Heart left ventricle (tissue), 16 donors: ENCODE measurements at regions of chr1 and their contacts with region 1.

Region 1: GRCh38 chr1:20753589-20753988 is 21.1 kb upstream of the SH2D5 start:
- DNase-seq: no peak
- ATAC-seq: no peak
- H3K4me3 ChIP-seq: no peak overlapping the region
- H3K27ac ChIP-seq: no peak overlapping the region
- H3K4me1 ChIP-seq: peaks cover 0 to 5% (median 0%) of the 10 kb centered on the region in 12 donors
- H3K27me3 ChIP-seq: no peaks in the 10 kb centered on the region
- CTCF ChIP-seq: no peak
- POLR2A ChIP-seq: no peak

Region 2: DNA sequence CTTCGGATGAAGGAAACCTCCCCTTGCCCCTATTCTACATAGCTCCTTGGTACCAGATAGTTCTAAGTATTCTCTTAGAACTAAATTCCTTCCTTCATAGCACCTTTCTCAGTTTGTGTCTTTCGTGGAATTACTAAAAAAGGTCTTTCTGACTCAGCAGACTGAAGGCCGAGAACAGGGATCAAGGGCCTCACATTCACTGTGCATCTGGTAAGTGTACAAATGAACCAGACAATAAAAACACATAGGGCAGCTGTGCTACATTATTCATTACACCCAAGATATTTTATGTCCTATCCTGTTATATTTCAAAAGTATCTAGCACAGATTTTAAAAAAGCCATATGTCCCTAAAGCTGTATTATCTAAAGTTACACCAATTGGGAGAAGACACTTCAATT is 96.4 kb after region 1 on chr1:
- intact Hi-C with region 1: loop called in 1 of 10 experiments (anchors 10 kb)
- DNase-seq: no peak
- ATAC-seq: no peak
- H3K4me3 ChIP-seq: no peak overlapping the region
- H3K27ac ChIP-seq: no peak overlapping the region
- H3K4me1 ChIP-seq: no peaks in the 10 kb centered on the region
- H3K27me3 ChIP-seq: no peaks in the 10 kb centered on the region
- CTCF ChIP-seq: no peak
- POLR2A ChIP-seq: no peak